Endothelial cell of umbilical vein (primary cell): ENCODE measurements at regions of chr9 and their contacts with region 1.

Region 1: GRCh38 chr9:88983830-88984542 is 7.3 kb upstream of the S1PR3 start:
- DNase-seq: no peak
- H3K4me3 ChIP-seq: no peak overlapping the region
- H3K27ac ChIP-seq: no peak overlapping the region
- H3K4me1 ChIP-seq: no peaks in the 10 kb centered on the region
- H3K27me3 ChIP-seq: peaks cover 0 to 8% of the 10 kb centered on the region in 2 experiments
- CTCF ChIP-seq: no peak
- POLR2A ChIP-seq: no peak

Region 2: DNA sequence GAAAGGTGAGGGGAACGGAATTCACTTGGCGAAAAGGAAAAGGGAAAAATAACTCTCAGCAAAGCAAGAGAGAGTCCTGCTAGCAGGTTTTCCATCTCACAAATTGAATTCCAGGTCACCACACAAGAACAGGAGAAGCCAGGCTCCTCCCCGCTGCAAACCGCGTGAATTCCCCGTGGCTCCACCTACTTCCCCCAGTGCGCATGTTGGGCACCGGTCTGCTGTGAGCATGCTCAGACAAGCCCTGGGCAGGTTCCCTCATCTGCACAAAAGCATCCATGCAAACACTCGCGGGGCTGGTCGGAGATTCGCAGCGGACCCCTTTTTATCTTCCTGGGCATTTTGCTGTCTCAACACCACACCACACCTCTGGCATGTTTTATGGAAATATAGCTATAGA is 51.2 kb before region 1 on chr9:
- CTCF ChIA-PET with region 1: no interaction called
- POLR2A ChIA-PET with region 1: no interaction called
- dilution Hi-C with region 1: no loop called
- intact Hi-C with region 1: loop called (anchors 2 kb)
- DNase-seq: no peak
- H3K4me3 ChIP-seq: no peak overlapping the region
- H3K27ac ChIP-seq: no peak overlapping the region
- H3K4me1 ChIP-seq: no peaks in the 10 kb centered on the region
- H3K27me3 ChIP-seq: no peaks in the 10 kb centered on the region
- CTCF ChIP-seq: no peak
- POLR2A ChIP-seq: no peak

Region 3: DNA sequence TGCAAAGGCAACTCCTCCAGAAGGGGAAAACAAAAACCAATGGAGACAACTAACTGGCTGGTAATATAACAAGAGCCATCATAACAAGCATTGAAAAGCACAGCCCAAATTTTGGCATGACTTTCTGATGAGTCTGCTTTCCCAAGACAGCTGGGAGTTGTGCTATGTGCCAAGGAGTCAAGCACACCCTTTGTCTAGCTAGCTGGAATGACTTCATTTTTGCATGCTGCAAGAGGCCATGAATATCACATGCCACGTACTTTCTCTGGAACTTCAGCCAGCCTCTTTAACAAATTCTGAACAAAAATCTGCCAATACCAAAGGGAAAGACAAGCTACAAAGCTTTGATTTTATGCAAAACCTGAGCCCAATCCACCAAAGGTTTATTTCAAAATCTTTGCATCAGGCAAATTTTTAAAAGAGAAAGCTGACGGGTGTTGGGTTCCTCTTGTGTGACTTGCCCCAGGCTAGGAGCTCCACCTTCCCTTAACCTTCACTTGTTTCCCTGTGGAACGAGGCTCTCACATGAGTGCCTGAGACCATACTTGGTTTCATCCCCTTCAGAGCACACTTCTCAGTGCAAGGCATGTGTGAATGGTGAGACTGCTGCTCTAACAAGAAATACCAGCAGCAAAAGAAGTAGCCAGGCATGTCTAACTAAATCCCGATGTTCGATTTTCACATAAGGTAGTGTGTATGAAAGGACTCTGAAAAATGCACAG is 54.6 kb after region 1 on chr9:
- CTCF ChIA-PET with region 1: no interaction called
- POLR2A ChIA-PET with region 1: no interaction called
- dilution Hi-C with region 1: no loop called
- intact Hi-C with region 1: no loop called
- DNase-seq: no peak
- H3K4me3 ChIP-seq: no peak overlapping the region
- H3K27ac ChIP-seq: no peak overlapping the region
- H3K4me1 ChIP-seq: peaks cover 4% of the 10 kb centered on the region
- H3K27me3 ChIP-seq: no peaks in the 10 kb centered on the region
- CTCF ChIP-seq: no peak
- POLR2A ChIP-seq: no peak

Region 4: DNA sequence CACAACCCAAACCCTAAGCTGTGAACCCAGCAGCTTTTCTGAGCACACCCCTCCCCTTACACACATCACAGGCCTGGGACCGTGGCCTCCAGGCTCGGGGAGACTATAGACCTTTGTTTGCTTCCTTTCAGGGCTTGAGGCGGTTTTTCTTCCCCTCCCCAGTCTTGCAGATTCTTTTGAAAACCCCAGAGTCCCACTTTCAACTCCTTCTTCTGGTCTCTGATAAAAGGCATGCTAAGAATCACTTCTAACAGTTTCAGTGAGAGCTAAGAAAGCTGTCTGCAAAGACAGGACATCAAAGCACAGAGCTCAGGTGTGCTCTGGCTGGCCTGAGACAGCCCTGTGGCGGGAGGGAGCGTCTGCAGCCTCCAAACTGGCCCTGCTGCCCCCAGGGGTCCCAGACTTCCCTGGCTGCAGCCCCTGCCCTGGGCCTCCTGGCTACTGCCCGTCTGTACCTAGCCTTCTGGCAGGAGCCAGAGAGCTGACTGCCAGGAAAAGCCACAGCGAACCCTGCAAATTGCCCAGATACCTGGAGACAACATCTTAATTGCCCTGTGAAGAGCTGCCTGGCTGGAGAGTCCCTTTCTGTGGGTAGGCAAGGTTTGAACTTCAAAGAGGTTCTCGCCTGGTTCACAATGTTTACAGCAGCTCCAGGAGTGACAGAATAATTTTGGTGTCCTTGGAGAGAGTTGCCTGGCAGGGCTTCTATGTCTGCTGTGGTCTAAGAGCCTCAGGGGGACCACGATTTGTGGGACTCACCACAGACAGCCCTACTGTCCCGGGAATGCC is 759.8 kb after region 1 on chr9:
- CTCF ChIA-PET with region 1: no interaction called
- POLR2A ChIA-PET with region 1: no interaction called
- dilution Hi-C with region 1: no loop called
- intact Hi-C with region 1: no loop called
- DNase-seq: no peak
- H3K4me3 ChIP-seq: no peak overlapping the region
- H3K27ac ChIP-seq: no peak overlapping the region
- H3K4me1 ChIP-seq: no peaks in the 10 kb centered on the region
- H3K27me3 ChIP-seq: no peaks in the 10 kb centered on the region
- CTCF ChIP-seq: no peak
- POLR2A ChIP-seq: no peak